ENCODE measurements at regions of chr17 and their contacts with region 1.

Region 1: DNA sequence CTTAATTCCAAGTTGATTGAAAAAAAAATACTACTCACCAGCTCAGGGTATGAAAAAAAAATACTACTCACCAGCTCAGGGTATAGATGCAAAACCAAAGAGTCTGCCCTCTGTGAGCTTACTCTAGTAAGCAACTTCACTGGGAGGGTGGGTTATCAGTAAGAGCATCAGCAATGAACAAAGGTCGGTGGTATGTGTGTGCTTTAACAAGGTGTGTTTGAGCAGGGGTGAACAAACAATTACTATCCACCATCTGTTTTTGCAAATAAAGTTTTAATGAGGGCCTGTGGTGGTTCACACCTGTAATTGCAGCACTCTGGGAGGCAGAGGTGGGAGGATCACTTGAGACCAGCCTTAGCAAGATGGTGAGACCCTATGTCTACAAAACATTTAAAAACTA is 20.0 kb downstream of the NUFIP2 start:
- DNase-seq: no peak
- ATAC-seq: no peak
- H3K4me3 ChIP-seq: no peak overlapping the region
- H3K27ac ChIP-seq: no peak overlapping the region
- H3K4me1 ChIP-seq: peaks cover 4% of the 10 kb centered on the region
- H3K27me3 ChIP-seq: no peaks in the 10 kb centered on the region
- CTCF ChIP-seq: no peak

Region 2: GRCh38 chr17:28828294-28829040 is 445.5 kb before region 1 on chr17:
- CTCF ChIA-PET with region 1: no interaction called
- POLR2A ChIA-PET with region 1: no interaction called
- in situ Hi-C with region 1: no loop called
- intact Hi-C with region 1: no loop called
- DNase-seq: no peak
- ATAC-seq: peak; percentile 53; the same call in 1 of the 2 replicates
- H3K4me3 ChIP-seq: no peak overlapping the region
- H3K27ac ChIP-seq: no peak overlapping the region
- H3K4me1 ChIP-seq: no peaks in the 10 kb centered on the region
- H3K27me3 ChIP-seq: no peaks in the 10 kb centered on the region
- CTCF ChIP-seq: no peak

Region 3: GRCh38 chr17:29256735-29257466 is 17.0 kb before region 1 on chr17:
- CTCF ChIA-PET with region 1: no interaction called
- POLR2A ChIA-PET with region 1: interaction called, 12 read pairs
- in situ Hi-C with region 1: no loop called
- intact Hi-C with region 1: no loop called
- DNase-seq: no peak
- ATAC-seq: no peak
- H3K4me3 ChIP-seq: no peak overlapping the region
- H3K27ac ChIP-seq: no peak overlapping the region
- H3K4me1 ChIP-seq: peaks cover 18% of the 10 kb centered on the region; the same call in 1 of the 2 replicates
- H3K27me3 ChIP-seq: no peaks in the 10 kb centered on the region
- CTCF ChIP-seq: no peak

Measured in Panc1 (cell line).